Mammary epithelial cell (primary cell): ENCODE measurements at regions of chr11 and their contacts with region 1.

Region 1: GRCh38 chr11:62671575-62672389 is at the starts of genes LBHD1 and UQCC3:
- DNase-seq: peak; percentile 85
- H3K4me3 ChIP-seq: peak within 1 kb of the TSS; percentile 58 to 94 (median 72)
- H3K27ac ChIP-seq: peak within 1 kb of the TSS; percentile 62
- H3K4me1 ChIP-seq: peaks cover 19% of the 10 kb centered on the region
- H3K27me3 ChIP-seq: no peaks in the 10 kb centered on the region
- CTCF ChIP-seq: no peak
- total RNA-seq, gene LBHD1: 5.3 to 8.7 TPM
- total RNA-seq, gene UQCC3: 4.0 to 11.5 TPM

Region 2: GRCh38 chr11:61816736-61817455 is 854.9 kb before region 1 on chr11 and contains the start of gene FADS1:
- CTCF ChIA-PET with region 1: no interaction called
- dilution Hi-C with region 1: loop called (anchors 10 kb)
- in situ Hi-C with region 1: no loop called
- intact Hi-C with region 1: no loop called
- DNase-seq: peak; percentile 73
- H3K4me3 ChIP-seq: peak within 1 kb of the TSS; percentile 52 to 66 (median 64)
- H3K27ac ChIP-seq: peak within 1 kb of the TSS; percentile 68
- H3K4me1 ChIP-seq: peaks cover 50% of the 10 kb centered on the region
- H3K27me3 ChIP-seq: no peaks in the 10 kb centered on the region
- CTCF ChIP-seq: peak; percentile 20 to 60
- total RNA-seq, gene FADS1: 32.9 to 38.8 TPM

Region 3: GRCh38 chr11:62715150-62716135 is 43.7 kb after region 1 on chr11:
- CTCF ChIA-PET with region 1: no interaction called
- dilution Hi-C with region 1: loop called (anchors 5 kb)
- in situ Hi-C with region 1: no loop called
- intact Hi-C with region 1: no loop called
- DNase-seq: no peak
- H3K4me3 ChIP-seq: no peak overlapping the region
- H3K27ac ChIP-seq: no peak overlapping the region
- H3K4me1 ChIP-seq: no peaks in the 10 kb centered on the region
- H3K27me3 ChIP-seq: no peaks in the 10 kb centered on the region
- CTCF ChIP-seq: no peak

Region 4: GRCh38 chr11:62771144-62772021 is 99.6 kb after region 1 on chr11 and contains the start of gene TAF6L:
- CTCF ChIA-PET with region 1: no interaction called
- dilution Hi-C with region 1: loop called (anchors 5 kb)
- in situ Hi-C with region 1: no loop called
- intact Hi-C with region 1: no loop called
- DNase-seq: peak; percentile 96
- H3K4me3 ChIP-seq: peak within 1 kb of the TSS; percentile 33 to 93 (median 55)
- H3K27ac ChIP-seq: peak within 1 kb of the TSS; percentile 53
- H3K4me1 ChIP-seq: peaks cover 16% of the 10 kb centered on the region
- H3K27me3 ChIP-seq: no peaks in the 10 kb centered on the region
- CTCF ChIP-seq: no peak
- total RNA-seq, gene TAF6L: 16.3 to 22.0 TPM

Region 5: DNA sequence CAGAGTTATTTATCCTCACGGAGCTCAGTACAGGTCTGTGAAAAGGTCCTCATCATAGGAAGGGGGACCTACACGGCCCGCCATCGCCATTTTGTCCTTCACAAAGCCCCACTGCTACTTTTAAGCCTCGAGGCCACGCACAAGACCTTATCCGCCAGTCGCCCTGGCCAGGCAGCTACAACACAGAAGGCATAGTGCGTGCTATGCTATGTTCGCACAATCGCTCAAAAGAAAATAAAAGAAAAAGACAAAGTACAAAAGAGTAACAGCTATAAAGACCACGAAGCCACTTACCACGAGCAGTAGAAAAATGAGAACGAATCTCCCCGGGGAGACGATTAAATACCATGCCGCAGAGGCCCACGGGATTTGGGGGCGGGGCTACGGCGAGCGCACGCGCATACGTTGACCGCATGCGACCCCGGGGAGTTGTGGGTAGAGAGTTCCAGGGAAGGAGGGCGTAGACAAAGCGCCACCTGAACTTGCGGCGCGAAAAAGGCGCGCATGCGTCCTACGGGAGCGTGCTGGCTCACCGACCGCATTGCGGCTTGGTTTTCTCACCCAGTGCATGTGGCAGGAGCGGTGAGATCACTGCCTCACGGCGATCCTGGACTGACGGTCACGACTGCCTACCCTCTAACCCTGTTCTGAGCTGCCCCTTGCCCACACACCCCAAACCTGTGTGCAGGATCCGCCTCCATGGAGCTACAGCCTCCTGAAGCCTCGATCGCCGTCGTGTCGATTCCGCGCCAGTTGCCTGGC is 184.0 kb after region 1 on chr11:
- CTCF ChIA-PET with region 1: no interaction called
- dilution Hi-C with region 1: no loop called
- in situ Hi-C with region 1: no loop called
- intact Hi-C with region 1: loop called (anchors 5 kb)
- DNase-seq: peak; percentile 98
- H3K4me3 ChIP-seq: peak overlapping the region; percentile 74 to 86 (median 84)
- H3K27ac ChIP-seq: peak overlapping the region; percentile 77
- H3K4me1 ChIP-seq: peaks cover 19% of the 10 kb centered on the region
- H3K27me3 ChIP-seq: no peaks in the 10 kb centered on the region
- CTCF ChIP-seq: no peak